ENCODE measurements at regions of chr1 and their contacts with region 1.

Region 1: DNA sequence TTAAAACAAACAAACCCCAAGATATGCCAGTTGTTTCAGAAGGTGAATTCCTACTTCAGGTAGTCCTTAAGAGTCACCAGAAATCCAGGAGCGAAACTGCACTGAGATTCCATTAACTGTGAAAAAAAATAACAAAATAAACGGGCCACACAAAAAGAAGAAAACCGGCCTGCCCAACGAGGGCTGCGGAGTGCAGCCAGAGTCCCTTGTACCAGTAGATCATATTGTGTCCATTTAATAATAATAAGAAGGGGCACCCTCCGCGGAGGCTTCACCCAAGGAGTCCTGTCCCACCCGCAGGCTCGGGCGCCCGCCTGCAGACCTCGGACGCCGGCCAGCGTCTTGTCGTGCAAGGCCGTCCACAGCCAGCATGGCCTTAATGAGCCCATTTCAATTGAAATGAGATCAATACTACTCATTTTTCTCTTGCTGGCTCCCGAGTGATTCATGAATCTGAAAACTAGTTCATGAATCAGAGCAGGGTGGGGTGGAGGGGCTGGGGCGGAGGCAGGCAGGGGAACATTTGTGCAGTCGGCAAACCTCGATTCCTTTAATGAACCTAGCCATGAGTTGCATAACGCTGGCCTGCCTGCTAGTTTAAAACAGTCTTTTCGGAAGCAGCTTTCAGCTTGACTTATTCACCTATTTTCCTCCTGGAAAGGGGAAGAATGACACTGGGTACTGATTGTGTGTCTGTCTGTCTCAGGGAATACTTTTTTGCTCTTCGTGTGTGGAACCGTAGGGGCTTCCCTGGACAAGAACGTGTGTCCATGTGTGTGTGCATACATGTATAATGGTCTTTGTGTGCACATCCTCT is 113.1 kb upstream of the IRF2BP2 start:
- DNase-seq: peak; percentile 76
- H3K4me3 ChIP-seq: peak overlapping the region in 1 of 8 donors; percentile 37
- H3K27ac ChIP-seq: peak overlapping the region; percentile 70 to 96 (median 88)
- H3K4me1 ChIP-seq: peaks cover 52 to 99% (median 86%) of the 10 kb centered on the region in 6 donors
- H3K27me3 ChIP-seq: no peaks in the 10 kb centered on the region
- CTCF ChIP-seq: no peak
- POLR2A ChIP-seq: no peak

Region 2: GRCh38 chr1:234610348-234611152 is 112.6 kb before region 1 on chr1:
- intact Hi-C with region 1: loop called (anchors 5 kb)
- DNase-seq: peak; percentile 98
- H3K4me3 ChIP-seq: peak overlapping the region; percentile 40 to 89 (median 51)
- H3K27ac ChIP-seq: peak overlapping the region; percentile 97 to 100 (median 99)
- H3K4me1 ChIP-seq: peaks cover 31 to 70% (median 60%) of the 10 kb centered on the region in 6 donors
- H3K27me3 ChIP-seq: no peaks in the 10 kb centered on the region
- CTCF ChIP-seq: peak in 1 of 11 experiments; percentile 16
- POLR2A ChIP-seq: peak; percentile 86 to 97 (median 96)

Region 3: GRCh38 chr1:234842726-234843641 is 119.9 kb after region 1 on chr1:
- intact Hi-C with region 1: loop called (anchors 10 kb)
- DNase-seq: peak; percentile 85
- H3K4me3 ChIP-seq: peak overlapping the region in 1 of 8 donors; percentile 42
- H3K27ac ChIP-seq: peak overlapping the region in 7 of 8 donors; percentile 24 to 78 (median 50)
- H3K4me1 ChIP-seq: peaks cover 25 to 81% (median 46%) of the 10 kb centered on the region in 6 donors
- H3K27me3 ChIP-seq: no peaks in the 10 kb centered on the region
- CTCF ChIP-seq: no peak
- POLR2A ChIP-seq: no peak

Measured in spleen (tissue), 13 donors.